Activated B cell treated with CpG ODN at 0.5 μM for 24 hours (primary cell): ENCODE measurements at regions of chr21 and their contacts with region 1.

Region 1: DNA sequence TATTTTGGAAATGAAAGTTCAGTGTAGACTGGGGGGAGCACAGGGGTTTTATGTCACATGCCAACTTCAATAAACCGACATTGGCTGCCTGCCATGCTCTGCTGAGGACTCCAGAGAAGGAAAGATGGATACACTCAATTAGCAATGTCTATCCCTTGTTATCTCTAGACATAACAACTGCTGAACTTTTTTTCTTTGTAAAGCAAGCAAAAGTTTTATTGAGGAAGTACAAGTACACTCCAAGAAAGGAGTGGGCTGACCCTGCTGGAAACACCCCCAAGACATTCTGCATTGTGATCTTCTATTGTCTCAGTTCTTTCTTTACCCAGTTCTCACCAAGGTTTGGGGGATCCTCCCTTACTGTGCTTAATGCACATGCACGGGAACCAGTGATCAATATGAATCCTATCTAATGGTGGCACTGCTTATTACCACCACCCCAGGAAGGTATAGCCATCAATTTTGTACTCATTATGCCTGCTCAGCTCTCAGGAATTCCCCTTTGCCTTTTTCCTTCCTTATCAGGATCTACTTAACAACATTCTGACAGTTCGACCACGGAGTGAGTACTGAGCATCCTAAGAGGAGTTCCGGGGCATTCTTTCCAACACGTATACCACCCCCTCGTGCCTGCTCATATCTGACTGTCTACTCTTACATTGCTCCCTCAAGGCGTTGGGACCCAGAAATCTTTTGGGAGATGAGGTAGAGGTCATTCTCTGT is 28.7 kb downstream of the SYNJ1 start:
- DNase-seq: no peak
- ATAC-seq: no peak
- H3K4me3 Mint-ChIP-seq: no peak overlapping the region
- H3K27ac Mint-ChIP-seq: no peak overlapping the region
- H3K4me1 Mint-ChIP-seq: no peaks in the 10 kb centered on the region
- H3K27me3 Mint-ChIP-seq: peaks cover 16% of the 10 kb centered on the region
- CTCF ChIP-seq: no peak

Region 2: DNA sequence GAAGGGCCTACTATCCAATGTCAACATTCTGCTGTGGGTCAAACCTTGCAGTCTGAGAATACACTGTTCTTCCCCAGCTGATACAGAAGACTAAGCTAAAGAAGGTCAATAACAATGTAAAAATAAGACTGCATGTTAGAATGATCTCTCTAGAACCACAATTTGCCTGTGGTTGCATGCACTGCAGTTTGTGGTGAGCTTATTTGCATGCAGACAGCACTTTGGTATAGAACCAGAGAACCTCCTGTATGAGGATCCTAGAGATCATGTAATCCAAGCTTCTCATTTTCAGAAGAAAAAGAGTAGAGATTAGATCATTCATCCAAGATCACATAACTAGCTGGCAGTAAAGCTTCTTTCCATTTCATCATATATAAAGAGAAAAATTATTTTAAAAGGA is 12.9 kb after region 1 on chr21:
- CTCF ChIA-PET with region 1: no interaction called
- POLR2A ChIA-PET with region 1: no interaction called
- intact Hi-C with region 1: loop called (anchors 1 kb)
- DNase-seq: peak; percentile 32
- ATAC-seq: peak; percentile 95
- H3K4me3 Mint-ChIP-seq: peak overlapping the region; percentile 24
- H3K27ac Mint-ChIP-seq: no peak overlapping the region
- H3K4me1 Mint-ChIP-seq: peaks cover 20% of the 10 kb centered on the region
- H3K27me3 Mint-ChIP-seq: peaks cover 42% of the 10 kb centered on the region
- CTCF ChIP-seq: no peak

Region 3: DNA sequence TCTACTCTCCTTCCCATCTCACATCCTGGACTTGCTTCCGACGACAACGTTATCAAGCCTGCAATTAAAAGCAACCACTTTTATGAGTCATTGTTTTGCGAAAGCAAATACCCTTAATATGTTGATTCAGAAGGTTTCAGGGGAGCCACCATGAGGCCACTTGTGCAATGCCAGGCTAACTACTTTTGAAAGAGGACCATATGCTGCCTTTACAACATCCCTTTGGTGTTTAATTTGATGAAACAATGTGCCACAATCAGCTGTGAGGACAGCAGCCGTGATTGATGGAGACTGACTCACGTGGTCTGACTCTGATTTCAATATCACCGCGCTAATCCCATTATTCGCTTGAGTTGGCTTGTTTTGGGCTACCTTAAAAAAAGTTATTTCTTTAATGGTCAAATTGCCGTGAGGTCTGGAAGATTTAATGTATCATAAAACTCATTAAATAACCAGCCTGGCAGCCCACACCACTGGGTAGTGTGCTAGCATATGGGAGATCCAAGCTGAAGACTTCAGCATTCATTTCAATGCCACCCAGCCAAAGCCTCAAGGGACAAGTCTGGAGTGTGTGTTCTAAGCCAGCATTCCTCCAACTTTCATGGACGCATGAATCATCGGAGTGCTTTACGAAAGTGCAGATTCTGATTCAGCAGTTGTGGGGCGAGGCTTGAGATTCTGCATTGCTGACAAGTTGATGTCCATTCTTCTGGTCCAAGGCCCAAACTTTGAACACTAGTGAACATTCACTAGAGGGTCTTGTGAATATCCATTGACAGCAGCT is 145.7 kb after region 1 on chr21:
- CTCF ChIA-PET with region 1: no interaction called
- POLR2A ChIA-PET with region 1: no interaction called
- intact Hi-C with region 1: no loop called
- DNase-seq: no peak
- ATAC-seq: no peak
- H3K4me3 Mint-ChIP-seq: no peak overlapping the region
- H3K27ac Mint-ChIP-seq: no peak overlapping the region
- H3K4me1 Mint-ChIP-seq: no peaks in the 10 kb centered on the region
- H3K27me3 Mint-ChIP-seq: peaks cover 23% of the 10 kb centered on the region
- CTCF ChIP-seq: no peak

Region 4: GRCh38 chr21:33419538-33420123 is 720.5 kb after region 1 on chr21:
- CTCF ChIA-PET with region 1: no interaction called
- POLR2A ChIA-PET with region 1: no interaction called
- intact Hi-C with region 1: no loop called
- DNase-seq: no peak
- ATAC-seq: no peak
- H3K4me3 Mint-ChIP-seq: no peak overlapping the region
- H3K27ac Mint-ChIP-seq: peak overlapping the region; percentile 46
- H3K4me1 Mint-ChIP-seq: peaks cover 6% of the 10 kb centered on the region
- H3K27me3 Mint-ChIP-seq: no peaks in the 10 kb centered on the region
- CTCF ChIP-seq: no peak